ENCODE measurements at regions of chr14 and their contacts with region 1.

Region 1: DNA sequence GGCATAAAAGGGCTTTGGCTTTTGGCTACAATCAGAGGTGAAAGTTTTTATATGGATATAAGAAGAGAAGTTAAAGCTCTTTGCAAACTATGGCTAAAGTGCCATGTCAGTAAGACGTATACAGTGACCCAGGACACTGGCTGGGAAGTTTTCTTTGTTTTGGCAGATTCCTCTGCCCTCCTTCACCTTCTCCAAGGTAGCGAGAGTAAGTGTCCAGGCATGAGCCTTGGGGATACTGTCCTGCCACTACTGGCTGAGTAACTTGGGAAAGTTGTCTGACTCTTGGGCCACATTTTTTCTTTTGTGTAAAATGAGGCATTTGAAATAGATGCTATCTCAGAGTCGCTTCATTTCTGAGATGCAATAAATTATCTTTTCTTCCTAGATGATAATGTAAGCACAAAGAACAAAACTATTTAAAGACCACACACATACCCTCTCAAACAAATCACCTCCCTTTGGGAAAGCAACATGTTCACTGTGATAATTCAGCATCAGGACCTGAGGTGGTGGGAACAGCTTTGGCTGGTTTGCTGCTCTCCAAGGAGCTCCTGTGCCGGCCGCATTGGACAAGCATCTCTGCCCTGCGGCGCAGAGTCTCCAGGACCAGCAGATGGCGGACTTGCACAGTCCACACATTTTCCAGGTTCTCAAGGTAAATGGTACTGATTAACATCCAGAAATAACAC is 106.3 kb downstream of the PTCSC3 start:
- DNase-seq: peak; percentile 77 to 78
- H3K4me3 ChIP-seq: no peak overlapping the region
- H3K4me3 Mint-ChIP-seq: no peak overlapping the region
- H3K27ac Mint-ChIP-seq: no peak overlapping the region
- H3K4me1 ChIP-seq: no peaks in the 10 kb centered on the region
- H3K4me1 Mint-ChIP-seq: no peaks in the 10 kb centered on the region
- H3K27me3 ChIP-seq: peaks cover 2% of the 10 kb centered on the region; the same call in 1 of the 2 replicates
- H3K27me3 Mint-ChIP-seq: peaks cover 4% of the 10 kb centered on the region
- CTCF ChIP-seq: peak; percentile 77 to 90

Region 2: DNA sequence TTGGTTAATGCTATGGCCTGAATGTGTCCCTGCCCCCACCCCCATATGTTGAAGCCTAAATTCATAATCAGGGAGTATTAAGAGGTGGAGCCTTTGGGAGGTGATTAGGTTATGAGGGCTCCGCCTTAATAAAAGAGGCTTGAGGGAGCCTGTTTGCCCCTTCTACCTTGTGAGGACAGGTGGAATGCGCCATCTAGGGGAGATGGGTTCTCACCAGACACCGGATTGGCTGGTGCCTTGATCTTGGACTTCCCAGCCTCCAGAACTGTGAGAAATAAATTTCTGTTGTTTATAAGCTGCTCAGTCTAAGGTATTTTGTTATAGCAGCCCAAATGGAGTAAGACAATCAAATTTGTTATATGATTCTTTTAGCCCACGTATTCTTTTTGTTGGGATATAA is 42.0 kb before region 1 on chr14:
- CTCF ChIA-PET with region 1: no interaction called
- POLR2A ChIA-PET with region 1: no interaction called
- intact Hi-C with region 1: no loop called
- DNase-seq: peak in 1 of 2 experiments; percentile 17
- H3K4me3 ChIP-seq: no peak overlapping the region
- H3K4me3 Mint-ChIP-seq: no peak overlapping the region
- H3K27ac Mint-ChIP-seq: no peak overlapping the region
- H3K4me1 ChIP-seq: no peaks in the 10 kb centered on the region
- H3K4me1 Mint-ChIP-seq: no peaks in the 10 kb centered on the region
- H3K27me3 ChIP-seq: no peaks in the 10 kb centered on the region; the same call in 1 of the 2 replicates
- H3K27me3 Mint-ChIP-seq: peaks cover 19% of the 10 kb centered on the region
- CTCF ChIP-seq: no peak

Region 3: GRCh38 chr14:36091096-36091495 is 20.9 kb after region 1 on chr14:
- CTCF ChIA-PET with region 1: interaction called, 25 read pairs
- POLR2A ChIA-PET with region 1: no interaction called
- intact Hi-C with region 1: no loop called
- DNase-seq: peak; percentile 70 to 75
- H3K4me3 ChIP-seq: no peak overlapping the region
- H3K4me3 Mint-ChIP-seq: peak overlapping the region; percentile 4
- H3K27ac Mint-ChIP-seq: peak overlapping the region; percentile 70
- H3K4me1 ChIP-seq: peaks cover 15% of the 10 kb centered on the region
- H3K4me1 Mint-ChIP-seq: peaks cover 13% of the 10 kb centered on the region
- H3K27me3 ChIP-seq: no peaks in the 10 kb centered on the region
- H3K27me3 Mint-ChIP-seq: no peaks in the 10 kb centered on the region
- CTCF ChIP-seq: no peak

Region 4: DNA sequence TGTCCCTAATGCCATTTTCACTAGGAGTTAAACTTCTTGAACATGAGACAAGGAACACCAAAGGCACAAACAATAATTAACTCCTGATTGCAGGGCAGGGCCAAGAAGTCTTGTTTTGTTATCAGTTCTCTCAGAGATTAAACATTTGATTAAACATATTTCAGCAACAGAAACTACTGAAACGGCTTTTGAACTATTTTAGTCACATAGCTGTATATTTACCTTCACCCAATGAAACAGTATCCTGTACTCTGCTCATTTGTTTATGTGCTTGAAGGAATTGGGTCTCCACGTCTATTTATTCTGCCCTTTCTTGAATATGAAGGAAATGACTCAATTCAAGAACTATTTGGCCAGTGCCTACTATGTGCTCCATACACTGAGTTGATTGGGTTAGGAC is 157.6 kb after region 1 on chr14:
- CTCF ChIA-PET with region 1: no interaction called
- POLR2A ChIA-PET with region 1: no interaction called
- intact Hi-C with region 1: no loop called
- DNase-seq: peak; percentile 10 to 46
- H3K4me3 ChIP-seq: no peak overlapping the region
- H3K4me3 Mint-ChIP-seq: no peak overlapping the region
- H3K27ac Mint-ChIP-seq: peak overlapping the region; percentile 64
- H3K4me1 ChIP-seq: peaks cover 22% of the 10 kb centered on the region
- H3K4me1 Mint-ChIP-seq: peaks cover 12% of the 10 kb centered on the region
- H3K27me3 ChIP-seq: no peaks in the 10 kb centered on the region; the same call in 1 of the 2 replicates
- H3K27me3 Mint-ChIP-seq: no peaks in the 10 kb centered on the region
- CTCF ChIP-seq: no peak

Region 5: DNA sequence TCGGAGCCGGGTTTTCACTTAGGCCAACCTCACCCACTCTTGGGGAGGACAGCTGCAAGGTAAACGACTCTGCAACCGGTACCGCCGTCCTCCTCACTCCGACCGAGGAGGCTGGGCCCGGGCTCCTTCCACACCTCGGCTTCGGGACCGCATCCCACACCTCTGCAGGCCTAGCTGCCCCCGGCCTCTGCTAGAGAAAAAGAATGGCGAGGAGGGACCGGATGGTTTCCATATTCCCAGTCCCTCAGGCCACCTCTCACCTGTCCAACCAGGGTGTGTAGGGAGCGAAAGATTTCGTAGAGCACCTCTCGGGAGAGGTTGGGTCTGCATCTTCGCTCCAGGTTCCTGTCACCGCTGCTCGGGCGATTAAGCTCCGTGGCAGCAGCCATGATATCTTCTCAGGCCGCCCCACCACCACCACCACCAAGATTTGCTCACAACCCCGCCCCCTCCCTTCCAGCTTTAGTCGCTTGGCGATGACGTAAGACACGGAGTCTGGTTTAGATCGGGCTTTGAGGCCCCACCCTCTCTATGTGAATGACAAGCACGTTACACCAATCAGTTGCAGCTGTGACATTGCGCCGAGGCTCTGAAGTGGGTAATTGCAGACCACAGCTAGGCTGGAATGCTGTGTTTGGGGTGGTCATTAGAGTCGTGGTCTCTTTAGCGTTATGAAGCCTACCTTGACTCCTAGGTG is 250.2 kb after region 1 on chr14 and contains the start of gene MBIP:
- CTCF ChIA-PET with region 1: interaction called, 4 read pairs
- POLR2A ChIA-PET with region 1: no interaction called
- intact Hi-C with region 1: loop called (anchors 2 kb)
- DNase-seq: peak; percentile 91 to 95
- H3K4me3 ChIP-seq: peak within 1 kb of the TSS; percentile 79
- H3K4me3 Mint-ChIP-seq: peak within 1 kb of the TSS; percentile 89
- H3K27ac Mint-ChIP-seq: peak within 1 kb of the TSS; percentile 87
- H3K4me1 ChIP-seq: no peaks in the 10 kb centered on the region
- H3K4me1 Mint-ChIP-seq: no peaks in the 10 kb centered on the region
- H3K27me3 ChIP-seq: no peaks in the 10 kb centered on the region
- H3K27me3 Mint-ChIP-seq: peaks cover 3% of the 10 kb centered on the region
- CTCF ChIP-seq: no peak
- total RNA-seq, gene MBIP: 27.8 and 28.8 TPM in 2 replicates

Region 6: GRCh38 chr14:36553656-36554260 is 483.6 kb after region 1 on chr14:
- CTCF ChIA-PET with region 1: interaction called, 31 read pairs
- POLR2A ChIA-PET with region 1: no interaction called
- intact Hi-C with region 1: loop called (anchors 1 kb)
- DNase-seq: peak in 1 of 2 experiments; percentile 48
- H3K4me3 ChIP-seq: no peak overlapping the region
- H3K4me3 Mint-ChIP-seq: no peak overlapping the region
- H3K27ac Mint-ChIP-seq: no peak overlapping the region
- H3K4me1 ChIP-seq: no peaks in the 10 kb centered on the region
- H3K4me1 Mint-ChIP-seq: no peaks in the 10 kb centered on the region
- H3K27me3 ChIP-seq: no peaks in the 10 kb centered on the region
- H3K27me3 Mint-ChIP-seq: no peaks in the 10 kb centered on the region
- CTCF ChIP-seq: peak; percentile 65 to 80